ENCODE measurements at regions of chr9 and their contacts with region 1.

Region 1: DNA sequence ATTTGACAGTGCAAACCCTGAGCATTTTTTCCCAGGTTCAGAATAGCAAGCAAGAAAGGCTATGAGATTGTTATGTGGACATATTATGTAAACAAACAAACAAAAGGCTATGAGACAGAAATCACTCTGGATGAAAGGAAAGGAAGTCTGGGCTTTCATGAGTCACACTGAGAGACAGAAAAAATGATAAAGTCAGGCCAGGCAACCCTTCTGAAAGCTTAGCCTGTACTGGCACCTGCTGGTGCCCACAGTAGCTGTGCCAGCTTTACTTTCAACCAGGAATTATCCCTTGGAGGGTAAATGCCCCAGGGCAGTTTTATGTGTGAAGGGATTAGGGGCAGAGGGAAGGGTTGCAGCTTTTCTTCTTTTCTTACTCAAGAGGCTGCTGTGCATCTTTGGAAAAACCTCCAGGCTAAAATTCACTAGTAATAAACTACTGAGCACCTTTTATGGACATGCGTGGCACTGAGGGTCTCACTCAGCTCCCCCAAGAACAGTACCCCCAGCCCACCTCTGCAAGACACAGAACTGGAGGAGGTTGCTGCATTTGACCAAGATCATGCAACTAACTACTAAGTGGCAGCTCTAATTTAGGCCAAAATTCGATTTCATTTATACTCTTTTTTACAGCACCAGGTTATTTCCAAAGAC is 41.7 kb downstream of the ACTL7B start:
- DNase-seq: peak; percentile 71
- H3K4me3 ChIP-seq: no peak overlapping the region
- H3K27ac ChIP-seq: no peak overlapping the region
- H3K4me1 ChIP-seq: peaks cover 14% of the 10 kb centered on the region
- H3K27me3 ChIP-seq: no peaks in the 10 kb centered on the region
- CTCF ChIP-seq: peak; percentile 84 to 85

Region 2: GRCh38 chr9:107421947-107422793 is 1391.9 kb before region 1 on chr9:
- CTCF ChIA-PET with region 1: no interaction called
- dilution Hi-C with region 1: no loop called
- in situ Hi-C with region 1: no loop called
- intact Hi-C with region 1: loop called (anchors 5 kb)
- DNase-seq: peak; percentile 59
- H3K4me3 ChIP-seq: no peak overlapping the region
- H3K27ac ChIP-seq: no peak overlapping the region
- H3K4me1 ChIP-seq: peaks cover 3% of the 10 kb centered on the region
- H3K27me3 ChIP-seq: no peaks in the 10 kb centered on the region
- CTCF ChIP-seq: peak; percentile 65 to 81

Region 3: GRCh38 chr9:107465467-107466451 is 1348.3 kb before region 1 on chr9:
- CTCF ChIA-PET with region 1: no interaction called
- dilution Hi-C with region 1: no loop called
- in situ Hi-C with region 1: no loop called
- intact Hi-C with region 1: loop called (anchors 1 kb)
- DNase-seq: peak; percentile 50
- H3K4me3 ChIP-seq: peak overlapping the region; percentile 51 to 71 (median 59)
- H3K27ac ChIP-seq: no peak overlapping the region
- H3K4me1 ChIP-seq: peaks cover 11% of the 10 kb centered on the region
- H3K27me3 ChIP-seq: no peaks in the 10 kb centered on the region
- CTCF ChIP-seq: peak; percentile 63 to 83

Region 4: DNA sequence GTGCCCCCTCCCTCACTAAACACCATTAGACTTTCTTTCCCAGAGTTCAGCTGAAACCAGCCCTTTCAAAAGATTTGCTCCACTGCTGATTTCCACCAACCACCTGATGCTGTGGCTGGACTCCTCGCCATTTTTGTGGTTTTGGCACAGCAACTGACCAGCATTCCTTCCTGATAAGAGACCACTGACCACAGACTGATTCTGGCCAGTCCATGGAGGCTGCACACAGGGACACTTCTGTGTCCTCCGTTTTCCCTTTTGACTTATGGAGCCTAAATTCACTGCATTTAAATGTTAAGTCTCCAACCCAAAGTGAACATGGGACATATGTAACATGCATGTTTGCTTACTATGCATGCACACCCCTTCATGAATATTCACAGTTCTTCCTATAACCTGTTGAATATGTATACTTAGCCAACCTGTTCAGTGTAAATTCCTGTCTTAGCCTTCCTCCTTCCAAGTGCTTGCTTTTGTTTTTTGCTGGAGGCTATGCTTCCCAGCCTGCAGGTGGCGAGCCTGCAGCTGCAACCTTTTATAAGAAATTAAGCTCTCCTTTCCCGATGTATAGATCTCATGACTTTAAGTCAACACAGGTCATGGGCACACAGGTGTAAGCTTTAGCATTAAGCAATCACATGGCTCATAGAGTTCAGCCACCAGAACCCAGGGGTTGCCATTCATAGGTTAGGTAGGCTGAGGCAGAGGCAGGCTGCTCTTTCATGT is 37.0 kb before region 1 on chr9:
- CTCF ChIA-PET with region 1: interaction called, 3 read pairs
- dilution Hi-C with region 1: no loop called
- in situ Hi-C with region 1: no loop called
- intact Hi-C with region 1: loop called (anchors 1 kb)
- DNase-seq: peak; percentile 55
- H3K4me3 ChIP-seq: no peak overlapping the region
- H3K27ac ChIP-seq: no peak overlapping the region
- H3K4me1 ChIP-seq: peaks cover 26% of the 10 kb centered on the region
- H3K27me3 ChIP-seq: no peaks in the 10 kb centered on the region
- CTCF ChIP-seq: peak; percentile 43 to 59